PC-9 (cell line): ENCODE measurements at regions of chr16 and their contacts with region 1.

Region 1: DNA sequence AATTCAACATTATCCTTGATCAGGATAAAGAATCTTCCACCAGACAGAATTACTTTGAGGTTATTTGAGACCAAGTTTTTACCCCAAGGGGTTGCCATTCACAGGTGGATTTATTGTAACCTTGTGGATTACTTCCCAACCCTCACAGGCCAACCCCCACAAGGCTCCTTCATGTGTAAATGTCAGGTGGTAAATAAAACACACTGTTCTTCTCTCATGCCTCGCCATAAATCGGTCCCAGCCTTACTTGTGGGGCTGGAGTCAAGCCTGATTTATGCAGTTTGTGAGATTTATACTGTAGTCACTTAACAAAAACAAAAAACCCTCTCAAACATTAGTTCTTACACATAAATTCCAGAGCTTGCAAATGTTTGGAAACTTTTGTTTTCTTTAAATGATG is 98.6 kb upstream of the IRX3 start:
- DNase-seq: no peak
- H3K4me3 ChIP-seq: no peak overlapping the region
- H3K27ac ChIP-seq: no peak overlapping the region
- H3K4me1 ChIP-seq: 0 out of 2 replicates have a peak, but pooled peaks cover 5% of the 10 kb centered on the region
- H3K27me3 ChIP-seq: no peaks in the 10 kb centered on the region
- CTCF ChIP-seq: no peak

Region 2: DNA sequence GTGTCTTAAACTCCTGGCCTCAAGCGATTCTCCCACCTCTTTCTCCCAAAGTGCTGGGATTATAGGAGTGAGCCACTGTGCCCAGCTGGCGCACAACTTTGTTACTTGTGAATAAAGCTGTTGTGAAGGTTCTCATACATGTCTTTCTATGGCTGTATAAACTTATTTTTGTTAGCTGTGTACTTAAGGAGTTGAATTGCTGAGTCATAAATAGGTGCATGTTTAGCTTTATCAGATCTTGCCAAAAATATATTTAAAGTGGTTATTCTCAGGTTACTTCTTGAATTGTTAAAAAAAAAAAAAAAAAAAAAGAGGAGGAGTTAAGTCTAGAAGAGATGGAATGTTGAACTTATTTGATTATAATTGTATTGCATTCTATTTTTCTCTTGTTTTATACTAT is 50.9 kb before region 1 on chr16:
- CTCF ChIA-PET with region 1: no interaction called
- POLR2A ChIA-PET with region 1: interaction called, 10 read pairs
- intact Hi-C with region 1: no loop called
- DNase-seq: peak in 1 of 2 experiments; percentile 77
- H3K4me3 ChIP-seq: no peak overlapping the region
- H3K27ac ChIP-seq: peak overlapping the region; percentile 56
- H3K4me1 ChIP-seq: peaks cover 25% of the 10 kb centered on the region
- H3K27me3 ChIP-seq: no peaks in the 10 kb centered on the region
- CTCF ChIP-seq: no peak

Region 3: GRCh38 chr16:54564841-54565240 is 179.7 kb after region 1 on chr16:
- CTCF ChIA-PET with region 1: no interaction called
- POLR2A ChIA-PET with region 1: no interaction called
- intact Hi-C with region 1: no loop called
- DNase-seq: no peak
- H3K4me3 ChIP-seq: no peak overlapping the region
- H3K27ac ChIP-seq: no peak overlapping the region
- H3K4me1 ChIP-seq: no peaks in the 10 kb centered on the region
- H3K27me3 ChIP-seq: no peaks in the 10 kb centered on the region
- CTCF ChIP-seq: no peak